ENCODE measurements at regions of chr17 and their contacts with region 1.

Region 1: DNA sequence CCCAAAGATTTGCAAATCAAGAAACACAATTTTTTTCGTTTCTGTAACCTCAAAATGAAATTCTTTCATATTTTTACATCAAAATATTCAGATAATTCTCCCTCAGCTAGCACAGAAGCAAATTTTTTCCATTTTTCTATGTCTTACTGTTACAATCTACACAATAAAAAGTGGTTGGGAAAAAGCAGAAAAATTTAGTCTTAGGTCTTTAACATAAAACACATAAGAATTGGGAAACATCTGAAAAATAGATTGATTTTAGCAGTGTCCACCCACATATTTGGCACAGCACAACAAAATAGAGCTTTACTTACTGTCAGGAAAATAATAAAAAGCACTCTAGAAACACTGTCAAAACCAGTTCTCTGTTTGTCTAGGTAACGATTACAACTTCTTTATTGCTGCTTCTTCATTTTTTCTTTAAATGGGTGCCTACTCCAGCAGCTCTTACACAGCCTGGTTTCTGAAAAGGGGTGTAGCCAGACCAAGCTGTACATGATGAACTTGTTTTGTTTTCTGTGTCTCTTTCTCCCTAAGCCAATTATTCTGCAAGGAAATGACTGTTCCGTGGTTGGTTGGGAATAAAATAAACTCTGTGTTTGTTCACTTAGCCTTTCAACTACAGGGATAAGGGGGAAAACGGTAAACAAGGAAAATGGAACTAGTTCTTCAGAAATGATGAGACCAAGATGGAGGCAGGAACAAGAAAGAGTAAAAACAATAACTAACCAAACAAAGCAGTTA is at the start of gene ABCA6:
- DNase-seq: peak; percentile 91
- H3K4me3 ChIP-seq: peak within 1 kb of the TSS; percentile 2 to 54 (median 24)
- H3K27ac ChIP-seq: peak within 1 kb of the TSS; percentile 50
- H3K4me1 ChIP-seq: peaks cover 18% of the 10 kb centered on the region
- H3K27me3 ChIP-seq: no peaks in the 10 kb centered on the region
- CTCF ChIP-seq: no peak
- POLR2A ChIP-seq: no peak
- total RNA-seq, gene ABCA6: 16.8 and 30.5 TPM in 2 replicates

Region 2: GRCh38 chr17:69130627-69131296 is 10.8 kb before region 1 on chr17:
- CTCF ChIA-PET with region 1: interaction called, 10 read pairs
- POLR2A ChIA-PET with region 1: no interaction called
- dilution Hi-C with region 1: no loop called
- intact Hi-C with region 1: no loop called
- DNase-seq: no peak
- H3K4me3 ChIP-seq: no peak overlapping the region
- H3K27ac ChIP-seq: no peak overlapping the region
- H3K4me1 ChIP-seq: no peaks in the 10 kb centered on the region
- H3K27me3 ChIP-seq: no peaks in the 10 kb centered on the region
- CTCF ChIP-seq: no peak
- POLR2A ChIP-seq: no peak

Region 3: DNA sequence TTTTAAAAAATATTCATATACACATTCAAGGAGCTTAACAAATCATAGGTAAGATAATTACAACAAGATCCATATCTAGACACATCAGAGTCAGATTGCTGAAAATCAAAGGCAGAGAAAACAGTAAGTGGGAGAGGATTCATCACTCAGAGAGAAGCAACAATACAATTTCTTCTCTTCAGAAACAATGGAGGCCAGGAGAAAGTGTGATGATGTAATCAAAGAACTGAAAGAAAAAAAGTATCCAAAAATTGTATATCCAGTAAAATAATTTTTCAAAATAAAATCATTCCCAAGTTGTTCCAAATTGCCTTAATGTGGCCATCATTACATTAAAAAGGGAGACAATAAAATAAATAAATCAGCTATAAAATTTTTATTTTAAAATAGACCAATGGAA is 17.8 kb after region 1 on chr17:
- CTCF ChIA-PET with region 1: no interaction called
- POLR2A ChIA-PET with region 1: no interaction called
- dilution Hi-C with region 1: no loop called
- intact Hi-C with region 1: no loop called
- DNase-seq: no peak
- H3K4me3 ChIP-seq: no peak overlapping the region
- H3K27ac ChIP-seq: no peak overlapping the region
- H3K4me1 ChIP-seq: no peaks in the 10 kb centered on the region
- H3K27me3 ChIP-seq: no peaks in the 10 kb centered on the region
- CTCF ChIP-seq: no peak
- POLR2A ChIP-seq: no peak

Region 4: GRCh38 chr17:69175812-69176795 is 34.5 kb after region 1 on chr17:
- CTCF ChIA-PET with region 1: no interaction called
- POLR2A ChIA-PET with region 1: no interaction called
- dilution Hi-C with region 1: no loop called
- intact Hi-C with region 1: no loop called
- DNase-seq: peak; percentile 42
- H3K4me3 ChIP-seq: no peak overlapping the region
- H3K27ac ChIP-seq: peak overlapping the region; percentile 16
- H3K4me1 ChIP-seq: peaks cover 11% of the 10 kb centered on the region
- H3K27me3 ChIP-seq: no peaks in the 10 kb centered on the region
- CTCF ChIP-seq: no peak
- POLR2A ChIP-seq: no peak

Measured in endothelial cell of umbilical vein (primary cell).